GM18951 (cell line): ENCODE measurements at regions of chr2 and their contacts with region 1.

Region 1: GRCh38 chr2:158024288-158024898 is 77.3 kb upstream of the UPP2 start:
- POLR2A ChIP-seq: no peak

Region 2: GRCh38 chr2:157302492-157303099 is 721.8 kb before region 1 on chr2:
- in situ Hi-C with region 1: loop called (anchors 25 kb)
- POLR2A ChIP-seq: no peak

Region 3: DNA sequence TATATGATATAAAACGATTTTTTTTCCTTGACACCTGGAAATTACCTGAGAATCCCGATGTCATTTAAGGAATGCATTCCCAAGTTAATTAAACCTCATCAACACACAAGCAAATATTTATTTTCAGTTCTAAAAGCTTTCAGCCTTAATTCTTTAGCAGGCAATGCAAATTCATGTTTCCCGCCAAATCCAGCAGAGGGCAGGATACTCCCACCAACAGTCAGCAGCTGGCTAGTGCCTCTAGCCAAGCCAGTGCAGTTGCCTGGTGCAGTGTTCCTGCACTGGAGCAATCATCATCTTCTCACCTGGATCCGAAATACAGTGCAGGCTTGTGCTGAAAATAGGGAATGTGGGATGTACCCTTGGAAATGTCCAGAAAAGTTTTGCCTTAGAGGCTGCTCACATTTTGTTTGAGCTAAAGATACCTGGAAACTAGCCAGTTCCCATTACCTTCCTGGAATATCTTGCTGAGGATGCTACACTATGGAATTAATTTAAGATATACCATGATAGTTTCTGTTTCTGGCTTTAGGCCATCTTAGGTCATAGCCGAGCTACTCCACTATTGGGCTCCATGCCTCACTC is 532.1 kb before region 1 on chr2:
- in situ Hi-C with region 1: loop called (anchors 25 kb)
- POLR2A ChIP-seq: no peak

Region 4: DNA sequence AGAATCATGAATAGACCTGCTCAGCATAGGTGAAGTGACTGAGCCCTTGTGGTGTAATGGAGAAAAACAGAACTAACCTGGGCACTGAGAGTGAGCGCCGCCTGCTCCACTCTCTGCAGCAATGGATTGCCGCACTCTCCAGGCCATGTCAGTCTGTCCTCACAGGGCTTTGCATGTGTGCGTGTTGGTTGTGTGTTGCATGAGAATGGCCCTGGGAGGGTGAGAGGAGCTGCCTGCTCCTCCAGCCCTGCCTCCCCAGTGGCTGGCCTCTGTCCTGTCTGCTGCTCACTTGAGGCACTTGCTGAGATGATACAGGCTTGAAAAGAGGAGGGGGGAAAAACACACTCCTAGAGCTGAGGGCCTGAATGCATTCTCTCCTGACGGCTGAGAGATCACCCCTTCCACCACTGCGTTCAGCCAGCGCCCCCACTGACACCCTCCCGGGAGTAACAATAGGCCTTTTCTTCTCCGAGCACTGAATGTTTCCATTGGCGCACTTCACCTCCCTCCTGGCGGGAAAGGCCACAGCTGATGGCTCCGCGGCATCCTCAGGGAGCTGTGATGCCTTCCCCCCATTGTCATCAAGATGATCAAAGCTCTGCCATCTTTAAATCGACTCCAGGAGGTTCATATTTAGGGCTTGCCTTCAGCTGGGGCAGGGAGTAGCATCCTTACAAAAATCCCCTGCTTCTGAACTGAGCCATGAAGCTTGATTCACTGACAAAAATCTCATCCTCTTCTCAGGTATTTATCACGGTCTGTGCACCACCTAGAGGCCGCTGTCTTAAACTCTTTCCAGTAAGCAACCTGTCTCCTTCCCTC is 720.9 kb after region 1 on chr2:
- in situ Hi-C with region 1: loop called (anchors 5 kb)
- POLR2A ChIP-seq: no peak